ENCODE measurements at regions of chr4 and their contacts with region 1.

Region 1: GRCh38 chr4:173420324-173420752 is 21.4 kb upstream of the SCRG1 start:
- DNase-seq: peak; percentile 10
- ATAC-seq: no peak
- H3K4me3 ChIP-seq: no peak overlapping the region
- H3K27ac ChIP-seq: no peak overlapping the region
- H3K4me1 ChIP-seq: no peaks in the 10 kb centered on the region
- H3K27me3 ChIP-seq: no peaks in the 10 kb centered on the region
- CTCF ChIP-seq: peak; percentile 55; the same call in 1 of the 2 replicates

Region 2: DNA sequence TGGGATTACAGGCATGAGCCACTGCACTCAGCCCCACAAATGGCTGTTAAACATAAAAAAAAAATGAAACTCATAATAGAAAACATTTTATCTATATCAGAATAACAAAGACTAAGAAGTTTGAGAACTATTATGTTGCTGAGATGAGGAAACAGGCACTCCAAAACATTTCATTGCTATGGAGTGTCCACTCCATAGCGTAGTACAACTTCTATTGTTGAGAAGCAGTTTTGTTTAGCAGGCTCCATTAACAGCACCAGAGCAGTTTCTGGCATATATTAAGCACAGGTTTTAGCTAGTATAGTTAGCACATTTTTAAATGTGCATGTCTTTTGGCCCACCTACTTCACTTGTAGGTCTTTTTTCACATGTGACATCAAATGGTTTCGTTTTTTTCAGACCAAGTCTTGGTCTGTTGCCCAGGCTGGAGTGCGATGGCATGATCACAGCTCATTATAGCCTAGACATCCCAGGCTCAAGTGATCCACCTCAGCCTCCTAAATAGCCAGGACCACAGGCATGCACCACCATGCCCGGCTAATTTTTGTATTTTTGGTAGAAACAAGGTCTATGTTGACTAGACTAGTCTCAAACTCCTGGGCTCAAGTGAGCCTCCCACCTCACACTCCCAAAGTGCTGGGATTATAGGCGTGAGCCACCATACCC is 92.0 kb before region 1 on chr4:
- CTCF ChIA-PET with region 1: no interaction called
- POLR2A ChIA-PET with region 1: no interaction called
- in situ Hi-C with region 1: no loop called
- intact Hi-C with region 1: loop called (anchors 5 kb)
- DNase-seq: no peak
- ATAC-seq: 0 out of 2 replicates have a peak, but pooled peaks have one; percentile 40
- H3K4me3 ChIP-seq: no peak overlapping the region
- H3K27ac ChIP-seq: no peak overlapping the region
- H3K4me1 ChIP-seq: peaks cover 10% of the 10 kb centered on the region; the same call in 1 of the 2 replicates
- H3K27me3 ChIP-seq: no peaks in the 10 kb centered on the region
- CTCF ChIP-seq: no peak

Region 3: GRCh38 chr4:173461170-173461569 is 40.8 kb after region 1 on chr4:
- CTCF ChIA-PET with region 1: no interaction called
- POLR2A ChIA-PET with region 1: no interaction called
- in situ Hi-C with region 1: no loop called
- intact Hi-C with region 1: no loop called
- DNase-seq: no peak
- ATAC-seq: no peak
- H3K4me3 ChIP-seq: no peak overlapping the region
- H3K27ac ChIP-seq: no peak overlapping the region
- H3K4me1 ChIP-seq: no peaks in the 10 kb centered on the region
- H3K27me3 ChIP-seq: no peaks in the 10 kb centered on the region
- CTCF ChIP-seq: no peak

Region 4: DNA sequence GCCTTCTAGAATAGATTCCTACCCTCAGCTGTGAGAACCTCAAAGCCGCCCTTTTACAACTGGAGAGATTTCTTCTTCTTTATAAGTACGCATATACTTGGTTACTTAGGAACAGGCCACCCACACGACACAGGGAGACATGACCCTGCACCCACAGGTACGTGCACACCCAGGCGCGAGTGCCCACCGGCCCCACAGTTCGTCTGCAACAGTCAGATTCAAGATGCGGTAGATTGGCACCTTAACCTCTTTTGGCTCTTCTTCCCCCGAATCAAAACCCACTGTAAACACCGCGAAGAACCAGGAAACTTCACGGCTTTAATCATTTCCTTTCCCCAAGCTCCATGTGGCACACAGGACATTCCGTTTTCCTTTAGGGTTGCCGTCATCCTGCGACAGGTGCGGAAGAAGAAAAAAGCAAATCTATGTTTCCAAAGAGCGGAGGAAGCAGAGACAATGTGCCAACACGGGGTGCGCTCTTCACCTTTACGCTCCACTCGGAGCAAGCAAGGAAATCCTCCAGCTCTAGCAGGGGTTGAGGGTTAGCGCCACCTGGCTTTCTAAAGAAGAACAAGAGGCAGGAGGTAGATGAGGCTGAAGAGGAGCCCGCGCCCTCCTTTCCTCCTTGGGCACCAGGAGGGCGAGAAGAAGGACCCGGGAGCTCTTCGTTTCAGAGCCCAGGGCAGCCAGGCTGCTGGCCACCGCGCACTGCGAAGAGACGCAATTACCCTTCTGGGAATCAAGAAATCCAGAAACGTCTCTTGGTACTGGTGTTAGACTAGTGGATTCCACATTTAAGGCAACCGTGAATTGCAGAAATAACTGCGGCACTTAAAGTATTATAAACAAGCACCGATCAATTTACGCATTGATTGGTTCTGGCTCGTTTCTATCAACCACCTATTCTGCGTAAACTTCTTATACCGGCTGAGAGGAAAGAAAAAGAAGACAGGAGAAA is 74.0 kb after region 1 on chr4:
- CTCF ChIA-PET with region 1: interaction called, 9 read pairs
- POLR2A ChIA-PET with region 1: no interaction called
- in situ Hi-C with region 1: no loop called
- intact Hi-C with region 1: loop called (anchors 2 kb)
- DNase-seq: peak; percentile 53
- ATAC-seq: peak; percentile 98
- H3K4me3 ChIP-seq: peak overlapping the region; percentile 44 to 68
- H3K27ac ChIP-seq: no peak overlapping the region
- H3K4me1 ChIP-seq: 0 out of 2 replicates have a peak, but pooled peaks cover 2% of the 10 kb centered on the region
- H3K27me3 ChIP-seq: peaks cover 5% of the 10 kb centered on the region
- CTCF ChIP-seq: peak; percentile 83

Region 5: DNA sequence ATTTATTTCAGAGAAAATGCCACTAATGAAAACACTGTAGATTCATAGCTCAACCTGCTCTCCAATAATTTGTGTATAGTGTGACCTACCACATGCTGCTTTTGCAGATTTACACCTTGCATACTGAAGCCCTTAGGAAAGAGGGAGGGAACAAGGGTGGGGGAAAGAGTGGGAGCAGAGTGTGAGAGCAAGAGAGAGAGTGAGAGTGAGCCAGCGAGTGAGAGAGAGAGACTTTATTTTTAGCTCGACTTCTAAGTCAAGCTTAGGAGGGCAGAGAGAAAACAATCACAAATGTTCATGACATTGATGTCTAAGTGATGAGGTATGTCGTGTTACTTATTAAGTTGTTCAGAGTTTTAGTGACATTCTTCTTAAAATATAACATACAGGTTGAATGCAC is 222.2 kb after region 1 on chr4:
- CTCF ChIA-PET with region 1: no interaction called
- POLR2A ChIA-PET with region 1: no interaction called
- in situ Hi-C with region 1: no loop called
- intact Hi-C with region 1: no loop called
- DNase-seq: no peak
- ATAC-seq: no peak
- H3K4me3 ChIP-seq: no peak overlapping the region
- H3K27ac ChIP-seq: no peak overlapping the region
- H3K4me1 ChIP-seq: no peaks in the 10 kb centered on the region
- H3K27me3 ChIP-seq: no peaks in the 10 kb centered on the region
- CTCF ChIP-seq: no peak